Ovary (tissue), 10 donors: ENCODE measurements at regions of chr5 and their contacts with region 1.

Region 1: DNA sequence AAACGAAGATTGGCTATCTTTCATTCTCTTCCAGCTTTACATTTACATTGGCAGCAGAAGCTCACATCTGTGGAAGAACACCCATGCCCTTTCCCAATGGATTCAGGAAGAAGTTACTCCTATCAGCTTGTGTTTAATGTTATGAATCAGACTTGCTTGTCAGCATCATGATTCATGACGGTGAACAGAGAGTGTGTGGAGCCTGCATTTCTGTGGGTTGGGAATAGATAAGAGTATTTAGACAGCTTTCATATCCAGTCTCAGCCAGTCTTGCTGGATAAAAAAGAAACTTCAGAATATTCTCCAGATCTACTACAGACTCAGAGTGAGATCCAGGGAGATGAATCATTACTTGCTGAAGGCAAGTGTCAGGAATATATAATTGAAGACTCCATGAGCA is 812.9 kb upstream of the ZNF608 start:
- DNase-seq: no peak
- H3K4me3 ChIP-seq: no peak overlapping the region
- H3K27ac ChIP-seq: no peak overlapping the region
- H3K4me1 ChIP-seq: no peaks in the 10 kb centered on the region
- H3K27me3 ChIP-seq: no peaks in the 10 kb centered on the region
- CTCF ChIP-seq: no peak
- EP300 ChIP-seq: no peak
- POLR2A ChIP-seq: no peak

Region 2: DNA sequence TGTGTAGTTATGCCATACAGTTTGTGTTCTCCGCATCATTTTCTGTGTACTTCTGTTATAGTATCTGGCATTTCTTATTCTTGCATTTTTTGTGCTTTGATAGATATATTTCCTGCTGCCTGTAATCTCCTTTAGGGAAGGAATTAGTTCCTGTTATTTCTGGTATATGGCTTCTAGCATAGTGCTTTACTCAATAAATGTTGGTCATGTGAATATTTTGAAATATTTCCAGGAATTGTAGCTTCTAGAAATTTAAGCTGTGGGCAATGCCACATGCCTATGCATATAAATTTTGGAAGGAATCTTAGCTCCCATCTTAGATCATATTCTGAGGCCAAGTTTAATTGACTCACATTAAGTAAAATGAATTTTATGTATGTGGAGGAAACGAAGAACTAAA is 1946.6 kb after region 1 on chr5:
- intact Hi-C with region 1: loop called in 1 of 4 experiments (anchors 5 kb)
- DNase-seq: no peak
- H3K4me3 ChIP-seq: no peak overlapping the region
- H3K27ac ChIP-seq: no peak overlapping the region
- H3K4me1 ChIP-seq: no peaks in the 10 kb centered on the region
- H3K27me3 ChIP-seq: no peaks in the 10 kb centered on the region
- CTCF ChIP-seq: no peak
- EP300 ChIP-seq: no peak
- POLR2A ChIP-seq: no peak